MCF 10A (cell line): ENCODE measurements at regions of chr2 and their contacts with region 1.

Region 1: GRCh38 chr2:137168571-137168970 is 403.2 kb downstream of the THSD7B start:
- DNase-seq: peak; percentile 85
- H3K4me3 Mint-ChIP-seq: peak overlapping the region; percentile 41
- H3K27ac Mint-ChIP-seq: peak overlapping the region; percentile 64
- H3K4me1 Mint-ChIP-seq: peaks cover 30% of the 10 kb centered on the region
- H3K27me3 Mint-ChIP-seq: no peaks in the 10 kb centered on the region
- CTCF ChIP-seq: no peak

Region 2: DNA sequence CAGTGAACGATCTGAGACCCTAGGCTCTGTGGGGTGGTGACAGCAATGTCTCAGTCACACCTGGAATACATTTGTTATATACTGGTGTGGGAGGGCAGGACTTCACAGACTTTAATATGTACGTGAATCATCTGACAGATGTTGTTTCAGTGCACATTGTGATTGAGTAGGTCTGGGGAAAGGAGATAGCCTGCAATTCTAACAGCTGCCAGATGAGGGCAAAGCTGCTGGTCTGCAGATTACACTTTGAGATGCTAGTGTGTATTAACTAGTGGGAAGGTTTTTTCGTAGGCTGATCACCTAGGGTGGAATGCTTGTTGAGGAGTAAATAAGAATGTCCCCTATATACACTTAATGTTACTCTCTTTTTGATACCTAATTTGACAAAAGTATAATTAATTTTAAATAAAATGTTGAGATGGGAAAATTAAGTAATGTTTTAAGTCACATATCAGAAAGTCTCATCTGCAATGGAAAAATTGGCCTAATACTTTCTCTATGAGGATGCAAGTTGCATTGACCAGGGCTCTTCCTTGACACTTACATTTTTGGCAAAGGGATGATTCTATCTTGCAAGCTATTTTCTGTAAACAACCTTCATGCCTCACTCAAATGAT is 298.8 kb after region 1 on chr2:
- CTCF ChIA-PET with region 1: no interaction called
- POLR2A ChIA-PET with region 1: no interaction called
- intact Hi-C with region 1: loop called (anchors 10 kb)
- DNase-seq: peak; percentile 73
- H3K4me3 Mint-ChIP-seq: no peak overlapping the region
- H3K27ac Mint-ChIP-seq: no peak overlapping the region
- H3K4me1 Mint-ChIP-seq: no peaks in the 10 kb centered on the region
- H3K27me3 Mint-ChIP-seq: no peaks in the 10 kb centered on the region
- CTCF ChIP-seq: peak; percentile 60